GM18951 (cell line): ENCODE measurements at regions of chr6 and their contacts with region 1.

Region 1: GRCh38 chr6:137323860-137324259 is 104.7 kb upstream of the IFNGR1 start:
- POLR2A ChIP-seq: no peak

Region 2: GRCh38 chr6:138001750-138002349 is 678.0 kb after region 1 on chr6:
- in situ Hi-C with region 1: loop called (anchors 10 kb)
- POLR2A ChIP-seq: no peak